AG04450 (cell line): ENCODE measurements at regions of chr12 and their contacts with region 1.

Region 1: GRCh38 chr12:57452937-57453509 is 2.1 kb upstream of the INHBE start:
- DNase-seq: no peak
- H3K4me3 ChIP-seq: no peak overlapping the region
- H3K27ac ChIP-seq: peak overlapping the region; percentile 98
- H3K27me3 ChIP-seq: no peaks in the 10 kb centered on the region
- CTCF ChIP-seq: peak; percentile 98

Region 2: GRCh38 chr12:57261428-57261865 is 191.6 kb before region 1 on chr12:
- CTCF ChIA-PET with region 1: interaction called, 85 read pairs
- POLR2A ChIA-PET with region 1: interaction called, 3 read pairs
- DNase-seq: no peak
- H3K4me3 ChIP-seq: no peak overlapping the region
- H3K27ac ChIP-seq: no peak overlapping the region
- H3K27me3 ChIP-seq: no peaks in the 10 kb centered on the region
- CTCF ChIP-seq: no peak

Region 3: GRCh38 chr12:57280211-57281062 is 172.6 kb before region 1 on chr12:
- CTCF ChIA-PET with region 1: interaction called, 21 read pairs
- POLR2A ChIA-PET with region 1: interaction called, 3 read pairs
- DNase-seq: peak; percentile 91
- H3K4me3 ChIP-seq: peak overlapping the region; percentile 38
- H3K27ac ChIP-seq: peak overlapping the region; percentile 74
- H3K27me3 ChIP-seq: no peaks in the 10 kb centered on the region
- CTCF ChIP-seq: no peak

Region 4: GRCh38 chr12:57340104-57340503 is 112.9 kb before region 1 on chr12:
- CTCF ChIA-PET with region 1: interaction called, 11 read pairs
- POLR2A ChIA-PET with region 1: interaction called, 7 read pairs
- DNase-seq: peak; percentile 16
- H3K4me3 ChIP-seq: no peak overlapping the region
- H3K27ac ChIP-seq: no peak overlapping the region
- H3K27me3 ChIP-seq: no peaks in the 10 kb centered on the region
- CTCF ChIP-seq: no peak

Region 5: DNA sequence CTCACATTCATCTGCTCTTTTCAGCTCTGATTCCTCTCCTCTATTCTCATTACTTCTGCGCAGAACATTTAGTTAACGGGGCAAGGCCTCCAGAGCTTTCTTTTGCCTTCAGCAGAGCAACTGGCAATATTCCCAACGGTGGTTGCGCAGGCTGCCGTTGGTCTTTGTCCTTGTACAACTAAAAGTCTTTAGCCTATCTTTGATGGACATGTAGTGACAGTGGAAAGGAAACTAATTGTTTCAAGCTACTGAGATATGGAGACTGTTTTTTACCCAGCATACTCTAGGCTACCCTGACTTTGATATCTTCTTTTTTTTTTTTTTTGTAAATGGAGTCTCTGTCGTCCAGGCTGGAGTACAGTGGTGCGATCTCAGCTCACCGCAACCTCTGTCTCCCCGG is 34.8 kb before region 1 on chr12:
- CTCF ChIA-PET with region 1: no interaction called
- POLR2A ChIA-PET with region 1: no interaction called
- DNase-seq: no peak
- H3K4me3 ChIP-seq: no peak overlapping the region
- H3K27ac ChIP-seq: no peak overlapping the region
- H3K27me3 ChIP-seq: no peaks in the 10 kb centered on the region
- CTCF ChIP-seq: no peak

Region 6: DNA sequence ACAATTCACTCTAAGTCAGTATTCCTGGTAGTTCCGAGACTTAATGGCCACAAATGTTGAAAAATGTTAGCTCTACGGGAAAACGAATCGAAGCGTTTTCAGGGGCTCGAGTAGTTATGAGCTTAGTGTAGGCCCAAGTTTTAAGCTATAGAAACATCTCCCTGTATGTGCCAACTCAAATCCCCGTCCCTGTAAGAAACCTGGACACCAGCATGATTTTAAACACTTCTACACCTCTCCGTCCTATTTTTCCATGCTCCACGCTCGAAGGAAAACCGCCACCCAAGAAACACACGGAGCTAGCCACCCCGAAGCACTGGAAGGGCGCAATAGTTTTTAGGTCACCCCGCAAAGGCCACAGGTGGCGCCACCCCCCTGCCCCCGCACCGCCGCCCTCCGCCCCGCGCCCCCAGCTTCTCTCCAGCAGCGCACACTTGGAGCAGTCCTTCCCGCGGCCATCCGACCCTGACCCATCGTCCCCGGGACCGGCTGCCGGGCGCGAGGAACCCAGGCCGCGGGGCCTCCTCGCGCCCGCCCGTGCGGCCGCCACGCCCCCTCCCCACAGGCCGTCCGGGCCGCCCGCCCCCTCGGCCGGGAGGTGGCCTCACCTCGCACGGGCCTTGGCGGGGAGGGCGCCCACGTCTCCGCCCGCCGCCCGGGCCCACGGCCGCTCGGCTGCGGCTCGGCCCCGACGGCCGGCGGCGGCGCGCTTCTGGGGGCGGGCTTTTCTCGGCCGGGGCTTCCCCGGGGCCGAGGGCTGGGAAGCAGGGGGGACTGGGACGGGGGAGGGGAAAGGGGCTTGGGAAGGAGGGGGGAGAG is 22.7 kb before region 1 on chr12:
- CTCF ChIA-PET with region 1: interaction called, 15 read pairs
- POLR2A ChIA-PET with region 1: interaction called, 5 read pairs
- DNase-seq: no peak
- H3K4me3 ChIP-seq: peak overlapping the region; percentile 72
- H3K27ac ChIP-seq: peak overlapping the region; percentile 74
- H3K27me3 ChIP-seq: no peaks in the 10 kb centered on the region
- CTCF ChIP-seq: no peak